ENCODE measurements at regions of chr7 and their contacts with region 1.

Region 1: GRCh38 chr7:47074702-47075153 is 507.2 kb downstream of the TNS3 start:
- DNase-seq: no peak
- H3K4me3 ChIP-seq: no peak overlapping the region
- H3K27ac ChIP-seq: no peak overlapping the region
- H3K4me1 ChIP-seq: no peaks in the 10 kb centered on the region
- H3K27me3 ChIP-seq: no peaks in the 10 kb centered on the region
- CTCF ChIP-seq: no peak
- EP300 ChIP-seq: no peak
- RAD21 ChIP-seq: no peak

Region 2: DNA sequence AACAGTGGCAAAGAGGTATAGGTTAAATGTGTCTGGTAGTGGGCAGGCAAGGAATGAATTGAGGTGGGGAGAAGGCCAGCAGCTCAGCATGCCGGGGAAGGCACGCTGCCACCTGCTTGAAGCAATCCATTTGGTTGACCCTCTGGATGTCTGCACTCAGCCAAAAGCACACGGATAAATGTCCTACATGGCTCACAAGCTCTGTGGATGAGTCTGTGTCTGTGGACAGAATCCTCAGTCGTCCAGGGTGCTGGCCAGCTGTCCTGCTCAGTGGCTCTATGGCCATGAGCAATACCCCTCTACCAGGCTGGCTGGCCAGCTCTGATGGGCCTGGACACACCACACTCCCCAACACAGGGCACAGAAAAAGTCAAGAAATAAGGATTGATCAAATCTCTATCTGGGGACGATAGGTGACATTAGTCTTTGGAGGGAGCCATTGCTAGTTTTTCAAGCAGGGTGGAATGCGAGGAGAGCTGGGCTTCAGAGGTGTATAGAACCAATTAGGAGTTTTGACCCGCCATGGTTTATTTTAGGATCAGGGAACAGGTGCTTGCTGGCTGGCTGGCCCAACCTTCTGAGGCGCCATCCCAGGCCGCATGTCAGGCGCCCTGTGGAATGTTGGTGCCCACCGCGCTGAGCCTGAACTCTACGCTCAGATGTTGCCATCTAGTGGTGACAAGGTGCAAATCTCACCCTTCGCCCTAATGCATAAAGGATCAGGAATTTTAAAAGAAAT is 13.8 kb after region 1 on chr7:
- CTCF ChIA-PET with region 1: interaction called, 16 read pairs
- POLR2A ChIA-PET with region 1: no interaction called
- DNase-seq: peak; percentile 77
- H3K4me3 ChIP-seq: no peak overlapping the region; a peak in 1 of 4 replicates
- H3K27ac ChIP-seq: no peak overlapping the region
- H3K4me1 ChIP-seq: peaks cover 2 to 10% of the 10 kb centered on the region in 2 experiments; a peak in 2 of 4 replicates
- H3K27me3 ChIP-seq: no peaks in the 10 kb centered on the region
- CTCF ChIP-seq: peak; percentile 99
- EP300 ChIP-seq: no peak
- RAD21 ChIP-seq: peak; percentile 99